ENCODE measurements at regions of chr3 and their contacts with region 1.

Region 1: DNA sequence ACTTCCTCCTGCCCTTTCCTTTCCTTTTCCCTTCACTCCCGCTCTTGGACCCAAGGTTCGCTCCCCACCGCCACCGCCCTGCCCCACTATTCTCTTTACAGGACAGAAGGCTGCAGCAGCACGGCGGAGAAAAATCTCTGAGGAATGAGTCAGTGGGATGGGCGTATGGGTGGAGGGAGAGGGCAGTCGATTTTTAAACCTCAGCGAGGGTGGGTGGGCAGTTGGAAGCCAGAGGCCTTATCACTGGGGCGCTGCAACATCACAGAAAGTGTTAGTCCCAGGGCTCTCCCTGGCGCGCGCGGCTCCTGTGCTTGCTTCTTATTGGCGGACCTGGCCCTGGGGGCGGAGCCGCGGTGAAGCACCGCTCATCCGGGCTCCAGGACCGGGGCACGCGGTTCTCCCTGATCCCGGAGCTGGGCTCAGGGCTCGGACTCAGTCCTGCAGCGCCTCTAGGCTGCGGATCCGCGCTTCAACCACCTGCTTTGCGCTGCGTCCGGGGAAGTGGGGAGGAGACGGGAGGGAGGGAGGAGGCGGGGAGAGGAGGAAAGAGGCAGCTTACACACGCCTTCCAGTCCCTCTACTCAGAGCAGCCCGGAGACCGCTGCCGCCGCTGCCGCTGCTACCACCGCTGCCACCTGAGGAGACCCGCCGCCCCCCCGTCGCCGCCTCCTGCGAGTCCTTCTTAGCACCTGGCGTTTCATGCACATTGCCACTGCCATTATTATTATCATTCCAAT is at the start of gene ALCAM:
- DNase-seq: peak; percentile 80
- H3K4me3 Mint-ChIP-seq: peak within 1 kb of the TSS; percentile 90
- H3K27ac Mint-ChIP-seq: peak within 1 kb of the TSS; percentile 98
- H3K4me1 Mint-ChIP-seq: peaks cover 43% of the 10 kb centered on the region
- H3K27me3 Mint-ChIP-seq: peaks cover 22% of the 10 kb centered on the region
- total RNA-seq, gene ALCAM: 24.9 and 25.2 TPM in 2 replicates

Region 2: GRCh38 chr3:104628185-104628789 is 738.2 kb before region 1 on chr3:
- intact Hi-C with region 1: loop called (anchors 2 kb)
- DNase-seq: no peak
- H3K4me3 Mint-ChIP-seq: no peak overlapping the region
- H3K27ac Mint-ChIP-seq: no peak overlapping the region
- H3K4me1 Mint-ChIP-seq: no peaks in the 10 kb centered on the region
- H3K27me3 Mint-ChIP-seq: no peaks in the 10 kb centered on the region

Region 3: DNA sequence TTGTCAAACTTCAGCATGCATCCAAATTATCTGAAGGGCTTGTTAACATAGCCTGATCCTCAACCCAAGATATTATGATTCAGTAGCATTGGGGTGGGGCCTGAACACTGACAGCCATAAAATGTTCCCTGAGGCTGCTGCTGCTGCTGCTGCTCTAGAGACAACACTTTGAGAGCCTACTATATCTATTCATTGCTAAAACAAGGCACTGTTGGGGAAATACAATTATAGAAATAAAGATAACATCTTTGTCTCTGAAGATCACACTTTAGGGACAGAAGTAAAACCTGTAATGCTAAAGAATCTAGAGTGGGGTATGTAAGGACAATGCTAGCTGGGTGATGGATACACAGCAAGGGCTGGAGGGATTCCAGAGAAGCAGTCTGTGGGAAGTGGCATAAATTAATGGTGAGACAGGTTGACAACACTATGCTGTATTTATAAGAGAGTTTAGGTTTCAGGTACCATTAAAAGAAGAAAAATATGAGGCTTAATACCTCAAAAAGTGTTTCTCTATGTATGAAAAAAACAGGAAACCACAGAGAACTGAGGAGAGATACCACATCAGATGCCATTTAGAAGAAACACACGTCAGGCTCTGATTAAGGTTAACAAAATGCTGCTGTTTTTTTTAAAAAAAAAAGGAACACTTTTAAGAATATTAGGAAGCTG is 386.4 kb after region 1 on chr3:
- intact Hi-C with region 1: loop called (anchors 2 kb)
- DNase-seq: peak; percentile 24
- H3K4me3 Mint-ChIP-seq: peak overlapping the region; percentile 57
- H3K27ac Mint-ChIP-seq: peak overlapping the region; percentile 98
- H3K4me1 Mint-ChIP-seq: peaks cover 88% of the 10 kb centered on the region
- H3K27me3 Mint-ChIP-seq: no peaks in the 10 kb centered on the region

Region 4: DNA sequence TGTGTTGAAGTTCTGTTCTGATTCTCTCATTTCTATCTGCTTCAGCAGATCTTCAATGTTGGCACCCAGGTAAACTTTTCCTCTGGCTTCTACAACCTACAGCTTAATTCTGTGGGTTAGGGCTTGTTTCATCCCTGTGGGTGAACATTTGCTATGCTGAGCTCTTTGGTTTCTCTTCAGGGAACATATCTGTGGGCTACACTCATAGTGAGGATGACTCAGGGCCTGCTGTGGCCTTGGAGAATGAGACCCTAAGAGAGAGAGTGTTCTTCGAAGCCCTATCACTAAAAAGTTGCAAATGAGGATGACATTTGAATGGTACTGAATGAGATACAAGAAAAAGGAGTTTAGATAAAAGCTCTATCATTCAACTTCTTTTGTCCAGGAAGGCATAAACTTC is 848.6 kb after region 1 on chr3:
- intact Hi-C with region 1: loop called (anchors 10 kb)
- DNase-seq: peak; percentile 5
- H3K4me3 Mint-ChIP-seq: peak overlapping the region; percentile 43
- H3K27ac Mint-ChIP-seq: peak overlapping the region; percentile 82
- H3K4me1 Mint-ChIP-seq: peaks cover 56% of the 10 kb centered on the region
- H3K27me3 Mint-ChIP-seq: no peaks in the 10 kb centered on the region

Region 5: GRCh38 chr3:106473576-106474475 is 1107.3 kb after region 1 on chr3:
- intact Hi-C with region 1: loop called (anchors 1 kb)
- DNase-seq: no peak
- H3K4me3 Mint-ChIP-seq: no peak overlapping the region
- H3K27ac Mint-ChIP-seq: peak overlapping the region; percentile 94
- H3K4me1 Mint-ChIP-seq: peaks cover 18% of the 10 kb centered on the region
- H3K27me3 Mint-ChIP-seq: no peaks in the 10 kb centered on the region

Measured in activated T-helper 1 cell treated with anti-CD3 and anti-CD28 coated beads, Interleukin-12 subunit alpha, Interleukin-12 subunit beta, Interleukin-2, Interleukin-4 antibody, amounts not matched to agents 30 ng/mL and 10 ng/mL and 1 ng/mL, durations not matched to agents 14 hours and 24 hours and 36 hours (primary cell).